Dorsolateral prefrontal cortex (tissue), 120 donors: ENCODE measurements at regions of chrX and their contacts with region 1.

Region 1: GRCh38 chrX:51182545-51182944 is 150.1 kb upstream of the NUDT10 start:
- DNase-seq: no peak
- H3K4me3 ChIP-seq: no peak overlapping the region
- H3K27ac ChIP-seq: no peak overlapping the region
- H3K27me3 ChIP-seq: peaks cover 0 to 49% (median 16%) of the 10 kb centered on the region in 45 donors
- CTCF ChIP-seq: peak in 1 of 56 donors; percentile 30

Region 2: DNA sequence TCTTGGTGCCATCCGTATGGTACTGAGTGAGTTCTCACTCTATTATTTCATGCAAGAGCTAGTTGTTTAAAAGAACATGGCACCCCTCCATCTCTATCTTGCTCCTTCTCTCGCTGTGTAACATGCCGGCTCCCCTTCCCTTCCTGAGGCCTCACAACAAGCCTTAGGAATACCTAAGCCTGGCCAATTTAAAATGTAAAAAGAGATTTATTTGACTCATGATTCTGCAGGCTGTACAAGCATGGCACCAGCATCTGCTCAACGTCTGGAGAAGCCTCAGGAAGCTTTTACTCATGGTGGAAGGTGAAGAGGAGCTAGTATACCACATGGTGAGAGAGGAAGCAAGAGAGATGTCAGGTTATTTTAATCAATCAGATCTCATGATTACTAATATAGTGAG is 59.7 kb after region 1 on chrX:
- intact Hi-C with region 1: loop called in 1 of 2 experiments (anchors 10 kb)
- DNase-seq: no peak
- H3K4me3 ChIP-seq: no peak overlapping the region
- H3K27ac ChIP-seq: no peak overlapping the region
- H3K27me3 ChIP-seq: peaks cover 0 to 11% (median 0%) of the 10 kb centered on the region in 45 donors
- CTCF ChIP-seq: no peak